ENCODE measurements at regions of chr3 and their contacts with region 1.

Region 1: GRCh38 chr3:133851266-133851906 is 44.3 kb downstream of the RAB6B start:
- DNase-seq: no peak
- H3K4me3 Mint-ChIP-seq: no peak overlapping the region
- H3K27ac Mint-ChIP-seq: peak overlapping the region; percentile 60
- H3K4me1 Mint-ChIP-seq: peaks cover 19% of the 10 kb centered on the region
- H3K27me3 Mint-ChIP-seq: no peaks in the 10 kb centered on the region

Region 2: DNA sequence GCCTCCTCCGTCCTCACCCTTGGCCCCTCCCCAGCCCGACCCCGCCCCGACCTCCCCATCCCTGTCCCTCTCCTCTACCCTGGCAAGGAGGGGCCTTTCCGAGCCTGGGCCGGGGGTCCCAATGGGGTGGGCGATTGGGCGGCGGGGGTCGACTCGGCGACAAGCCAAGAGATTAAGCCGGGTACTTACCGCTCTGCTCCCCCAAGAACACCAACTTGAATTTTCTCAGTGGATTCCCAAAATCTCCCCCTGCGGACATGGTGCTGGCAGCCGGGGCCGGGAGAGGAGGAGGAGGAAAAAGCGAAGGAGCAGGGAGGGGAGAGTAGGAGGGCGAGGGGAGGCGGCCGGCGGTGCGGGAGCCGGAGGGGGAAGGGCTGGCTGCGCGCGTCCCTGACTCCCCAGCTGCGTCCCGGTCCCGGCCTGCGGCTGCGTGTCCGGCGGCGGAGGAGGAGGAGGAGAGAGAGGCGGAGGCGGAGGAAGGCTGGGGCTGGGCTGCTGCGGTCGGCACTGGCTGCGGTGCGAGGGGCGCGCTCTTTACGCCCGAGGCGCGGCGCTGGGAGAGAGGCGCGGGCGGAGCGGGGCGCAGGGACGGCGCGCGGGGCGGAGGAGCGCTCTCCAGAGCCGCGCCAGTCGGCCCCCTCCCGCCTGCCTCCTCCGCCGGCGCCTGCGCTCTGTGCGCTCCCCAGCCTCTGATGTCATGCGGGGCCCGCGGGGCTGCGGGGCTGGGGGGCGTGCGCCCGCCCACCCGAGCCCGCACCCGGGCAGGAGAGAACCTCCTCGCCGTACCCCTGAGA is 44.0 kb after region 1 on chr3 and contains the start of gene RAB6B:
- intact Hi-C with region 1: loop called (anchors 2 kb)
- DNase-seq: no peak
- H3K4me3 Mint-ChIP-seq: peak within 1 kb of the TSS; percentile 80
- H3K27ac Mint-ChIP-seq: no peak within 1 kb of the TSS
- H3K4me1 Mint-ChIP-seq: peaks cover 2% of the 10 kb centered on the region
- H3K27me3 Mint-ChIP-seq: peaks cover 44% of the 10 kb centered on the region
- total RNA-seq, gene RAB6B: 4.6 and 7.6 TPM in 2 replicates

Region 3: DNA sequence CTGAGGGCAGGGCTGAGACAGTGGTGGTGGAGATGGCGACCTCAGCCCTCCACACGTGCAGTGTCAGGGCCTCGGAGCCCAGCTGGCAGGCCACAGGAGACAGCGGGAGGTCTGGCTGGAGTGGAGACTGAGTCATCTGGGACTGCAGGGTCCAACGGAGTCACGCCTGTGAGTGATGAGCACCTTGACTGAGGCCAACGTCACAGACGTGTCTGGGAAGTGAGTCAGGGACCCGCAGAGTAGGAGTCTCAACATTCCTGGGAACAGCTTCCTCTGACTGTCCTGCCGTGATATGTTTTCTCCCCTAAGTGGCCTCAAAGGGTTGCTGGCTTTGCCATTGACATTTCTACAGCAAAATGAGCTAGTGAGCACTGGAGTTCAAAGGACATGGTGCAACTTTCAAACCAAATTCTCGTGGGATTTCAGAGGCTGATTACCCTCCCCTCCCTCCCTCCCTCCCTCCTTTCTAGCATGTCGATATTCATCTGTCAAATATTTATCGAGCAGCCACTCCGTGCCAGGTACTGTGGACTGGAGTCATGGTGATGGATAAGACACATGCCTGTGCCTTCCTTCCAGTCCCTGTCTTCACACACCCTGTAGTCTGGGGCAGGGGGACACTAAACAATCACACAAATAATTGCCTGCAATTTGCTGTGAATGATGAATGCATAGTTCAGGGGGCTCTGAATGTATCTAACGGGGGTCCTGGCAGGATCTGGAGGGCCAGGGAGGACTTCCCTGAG is 576.2 kb after region 1 on chr3:
- intact Hi-C with region 1: no loop called
- DNase-seq: no peak
- H3K4me3 Mint-ChIP-seq: no peak overlapping the region
- H3K27ac Mint-ChIP-seq: no peak overlapping the region
- H3K4me1 Mint-ChIP-seq: no peaks in the 10 kb centered on the region
- H3K27me3 Mint-ChIP-seq: peaks cover 7% of the 10 kb centered on the region

Region 4: DNA sequence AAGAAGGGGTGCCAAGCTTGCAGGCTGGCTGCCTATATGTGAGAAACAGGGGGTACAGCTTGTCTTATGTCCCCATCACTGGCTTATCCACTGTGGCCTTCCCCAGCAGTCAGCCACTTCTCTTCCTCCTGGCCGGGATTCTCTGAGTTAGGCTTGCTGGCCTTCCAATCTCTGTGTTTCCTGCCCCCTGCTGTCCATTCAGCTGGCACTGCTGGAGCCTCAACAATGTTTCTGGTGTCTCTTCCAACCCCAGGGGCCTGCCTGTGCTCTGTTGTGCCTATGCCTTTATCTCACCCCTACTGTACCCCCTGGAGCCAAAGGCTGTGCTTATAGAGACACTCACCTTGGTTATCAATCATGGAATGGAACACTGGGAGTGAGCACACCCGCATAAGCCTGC is 597.9 kb after region 1 on chr3:
- intact Hi-C with region 1: no loop called
- DNase-seq: no peak
- H3K4me3 Mint-ChIP-seq: no peak overlapping the region
- H3K27ac Mint-ChIP-seq: no peak overlapping the region
- H3K4me1 Mint-ChIP-seq: no peaks in the 10 kb centered on the region
- H3K27me3 Mint-ChIP-seq: peaks cover 17% of the 10 kb centered on the region